ENCODE measurements at regions of chr10 and their contacts with region 1.

Region 1: GRCh38 chr10:17872191-17873091 is 63.3 kb downstream of the MRC1 start:
- H3K4me3 Mint-ChIP-seq: no peak overlapping the region
- H3K27ac Mint-ChIP-seq: peak overlapping the region; percentile 63
- H3K4me1 Mint-ChIP-seq: peaks cover 56% of the 10 kb centered on the region
- H3K27me3 Mint-ChIP-seq: no peaks in the 10 kb centered on the region

Region 2: DNA sequence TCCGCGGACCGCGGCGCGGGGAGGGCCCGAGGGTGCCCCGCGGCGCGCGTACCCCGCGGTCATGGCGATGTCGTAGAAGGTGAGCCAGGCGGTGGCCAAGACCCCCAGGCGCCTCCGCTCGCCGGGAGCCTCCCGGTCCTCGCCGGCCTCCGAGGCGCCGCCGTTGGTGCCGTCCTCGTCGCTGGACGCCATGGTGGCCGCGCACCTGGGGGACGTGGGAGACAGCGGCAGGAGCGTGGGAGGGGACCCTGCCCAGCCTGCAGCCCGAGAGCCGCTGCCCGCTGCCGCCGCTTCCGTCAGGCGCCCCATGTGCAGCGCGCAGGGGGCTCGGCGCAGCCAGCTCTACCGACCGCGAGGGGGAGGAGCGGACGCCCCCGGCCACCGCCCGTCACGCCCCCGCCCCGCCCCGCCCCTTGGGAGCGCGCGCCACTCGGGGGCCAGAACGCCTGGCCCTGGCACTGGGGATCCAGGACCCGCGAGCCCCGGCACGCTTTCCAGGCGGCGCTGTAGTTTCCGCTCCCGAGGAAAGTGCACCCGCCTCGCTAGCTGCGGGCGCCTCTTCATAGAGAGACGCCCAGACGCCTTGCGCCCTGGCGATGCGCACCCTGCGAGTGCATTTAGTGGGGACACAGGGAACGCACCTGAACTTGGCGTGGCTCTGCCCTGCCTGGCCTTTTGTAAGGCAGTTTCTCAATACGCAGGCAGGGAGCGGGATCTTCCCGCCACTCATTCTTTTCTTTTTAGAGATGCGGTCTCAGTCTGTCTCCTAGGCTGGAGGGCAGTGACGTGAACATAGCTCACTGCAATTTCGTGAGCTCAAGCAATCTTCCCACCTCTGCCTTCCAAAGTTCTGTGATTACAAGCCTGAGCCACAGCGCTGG is 255.2 kb before region 1 on chr10 and contains the start of gene HACD1:
- intact Hi-C with region 1: loop called (anchors 10 kb)
- H3K4me3 Mint-ChIP-seq: peak within 1 kb of the TSS; percentile 74
- H3K27ac Mint-ChIP-seq: peak within 1 kb of the TSS; percentile 65
- H3K4me1 Mint-ChIP-seq: peaks cover 8% of the 10 kb centered on the region
- H3K27me3 Mint-ChIP-seq: peaks cover 12% of the 10 kb centered on the region

Region 3: DNA sequence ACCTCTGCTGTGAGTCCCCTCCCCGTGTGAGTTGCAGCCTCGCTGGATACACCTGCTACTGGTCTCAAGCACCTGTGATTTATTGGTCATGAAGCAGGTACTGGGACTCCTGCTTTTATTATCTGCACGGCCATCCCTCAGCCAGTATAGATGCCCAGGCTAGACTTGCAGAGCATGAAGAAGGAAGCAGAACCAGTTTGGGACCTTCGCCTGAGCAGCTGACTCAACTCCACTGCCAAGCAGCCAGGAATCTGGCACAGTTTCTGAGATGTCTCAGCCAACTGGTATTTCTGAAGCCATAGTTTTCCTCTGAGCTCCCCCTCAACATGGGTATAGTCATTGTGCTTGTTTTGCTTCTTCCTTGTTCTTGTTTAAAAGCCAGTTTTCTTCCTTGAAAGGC is 51.3 kb after region 1 on chr10:
- intact Hi-C with region 1: no loop called
- H3K4me3 Mint-ChIP-seq: no peak overlapping the region
- H3K27ac Mint-ChIP-seq: no peak overlapping the region
- H3K4me1 Mint-ChIP-seq: peaks cover 20% of the 10 kb centered on the region
- H3K27me3 Mint-ChIP-seq: no peaks in the 10 kb centered on the region

Region 4: DNA sequence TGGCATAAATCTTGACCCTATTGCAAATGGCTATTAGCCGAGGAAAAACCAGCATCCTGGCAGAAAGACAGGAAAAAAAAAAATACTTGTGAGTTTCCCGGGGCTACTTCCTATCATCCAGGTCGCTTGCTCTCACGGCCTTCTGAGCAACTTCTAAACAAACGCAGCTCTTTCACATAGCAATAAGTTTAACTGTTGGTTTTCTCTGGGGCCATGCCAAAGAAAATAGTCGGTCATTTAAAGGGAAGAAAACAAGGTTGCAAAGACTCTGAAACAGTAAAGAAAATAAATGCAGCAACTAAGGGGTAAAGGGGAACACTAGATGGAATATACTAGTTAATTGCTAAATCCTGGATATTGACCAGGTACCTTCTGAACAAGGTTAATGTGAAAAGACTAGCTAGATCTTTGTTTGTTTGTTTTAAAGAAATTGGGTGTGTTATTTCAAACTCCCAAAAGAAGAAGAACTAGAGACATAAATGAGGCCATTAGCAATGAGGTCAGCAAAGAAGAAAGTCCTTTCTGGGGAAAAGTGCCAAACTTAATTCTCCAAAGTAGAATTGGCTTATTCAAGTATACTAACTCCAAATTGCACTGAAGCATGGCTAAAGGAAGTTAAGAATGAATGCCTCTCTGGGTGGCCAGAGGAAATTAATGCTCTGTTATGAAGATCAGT is 133.5 kb after region 1 on chr10:
- intact Hi-C with region 1: no loop called
- H3K4me3 Mint-ChIP-seq: no peak overlapping the region
- H3K27ac Mint-ChIP-seq: no peak overlapping the region
- H3K4me1 Mint-ChIP-seq: no peaks in the 10 kb centered on the region
- H3K27me3 Mint-ChIP-seq: peaks cover 4% of the 10 kb centered on the region

Region 5: GRCh38 chr10:18364987-18365775 is 492.7 kb after region 1 on chr10:
- intact Hi-C with region 1: no loop called
- H3K4me3 Mint-ChIP-seq: no peak overlapping the region
- H3K27ac Mint-ChIP-seq: no peak overlapping the region
- H3K4me1 Mint-ChIP-seq: no peaks in the 10 kb centered on the region
- H3K27me3 Mint-ChIP-seq: no peaks in the 10 kb centered on the region

Measured in dendritic cell treated with granulocyte-macrophage colony-stimulating factor and Interleukin-4, amounts not matched to agents 40 ng/mL and 50 ng/mL, for 4 days (primary cell).